Activated CD4-positive, alpha-beta T cell treated with anti-CD3 and anti-CD28 coated beads for 36 hours (primary cell): ENCODE measurements at regions of chr6 and their contacts with region 1.

Region 1: DNA sequence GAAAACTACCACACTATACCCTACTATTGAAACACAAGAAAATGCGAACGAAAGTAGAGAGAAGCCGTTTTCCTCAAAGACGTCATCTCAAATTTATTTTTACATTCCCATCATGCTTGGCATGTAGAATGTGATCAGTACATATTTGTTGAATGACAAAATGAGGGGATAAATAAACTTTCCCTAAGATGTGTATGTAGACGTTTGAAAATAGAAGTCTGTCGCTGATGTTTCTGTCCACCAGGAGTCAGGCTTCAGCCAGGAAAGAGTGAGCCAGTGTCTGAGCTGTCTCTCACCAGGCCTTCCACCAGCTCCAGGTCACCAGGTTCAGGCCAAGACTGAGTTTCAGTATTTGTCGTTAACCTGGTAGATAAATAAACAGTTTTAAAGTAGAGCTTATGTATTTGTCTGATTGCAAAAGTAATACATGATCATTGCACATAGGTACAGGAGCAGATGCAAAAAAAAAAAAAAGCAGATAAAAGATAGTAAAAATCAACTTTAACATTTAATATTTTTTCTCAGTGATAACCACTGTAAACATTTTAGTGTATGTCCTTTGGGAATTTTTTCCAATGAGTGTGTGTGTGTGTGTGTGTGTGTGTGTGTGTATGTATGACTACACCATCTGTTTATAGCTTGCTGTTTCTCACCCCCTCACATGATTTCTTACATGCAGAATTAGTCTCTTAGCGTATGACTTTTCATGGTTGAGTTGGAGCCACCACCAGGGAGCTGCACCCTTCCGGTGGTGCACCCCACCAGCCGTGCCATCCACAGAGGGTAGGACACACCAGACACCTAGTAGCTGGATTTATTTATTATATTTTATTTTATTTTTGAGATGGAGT is 26.2 kb downstream of the WRNIP1 start:
- DNase-seq: peak; percentile 83
- ATAC-seq: peak; percentile 76
- H3K4me3 Mint-ChIP-seq: no peak overlapping the region
- H3K27ac Mint-ChIP-seq: peak overlapping the region; percentile 71
- H3K4me1 Mint-ChIP-seq: peaks cover 44% of the 10 kb centered on the region
- H3K27me3 Mint-ChIP-seq: no peaks in the 10 kb centered on the region

Region 2: GRCh38 chr6:2651961-2652360 is 139.4 kb before region 1 on chr6:
- CTCF ChIA-PET with region 1: no interaction called
- POLR2A ChIA-PET with region 1: no interaction called
- intact Hi-C with region 1: no loop called
- DNase-seq: no peak
- ATAC-seq: no peak
- H3K4me3 Mint-ChIP-seq: no peak overlapping the region
- H3K27ac Mint-ChIP-seq: no peak overlapping the region
- H3K4me1 Mint-ChIP-seq: no peaks in the 10 kb centered on the region
- H3K27me3 Mint-ChIP-seq: peaks cover 14% of the 10 kb centered on the region

Region 3: GRCh38 chr6:2773450-2773849 is 17.9 kb before region 1 on chr6:
- CTCF ChIA-PET with region 1: interaction called, 33 read pairs
- POLR2A ChIA-PET with region 1: no interaction called
- intact Hi-C with region 1: loop called in 1 of 2 experiments (anchors 2 kb)
- DNase-seq: no peak
- ATAC-seq: no peak
- H3K4me3 Mint-ChIP-seq: no peak overlapping the region
- H3K27ac Mint-ChIP-seq: no peak overlapping the region
- H3K4me1 Mint-ChIP-seq: peaks cover 42% of the 10 kb centered on the region
- H3K27me3 Mint-ChIP-seq: no peaks in the 10 kb centered on the region

Region 4: GRCh38 chr6:2848851-2849250 is 57.5 kb after region 1 on chr6:
- CTCF ChIA-PET with region 1: interaction called, 49 read pairs
- POLR2A ChIA-PET with region 1: no interaction called
- intact Hi-C with region 1: loop called (anchors 1 to 2 kb)
- DNase-seq: peak; percentile 86
- ATAC-seq: peak; percentile 69
- H3K4me3 Mint-ChIP-seq: peak overlapping the region; percentile 58
- H3K27ac Mint-ChIP-seq: peak overlapping the region; percentile 88
- H3K4me1 Mint-ChIP-seq: peaks cover 59% of the 10 kb centered on the region
- H3K27me3 Mint-ChIP-seq: no peaks in the 10 kb centered on the region

Region 5: DNA sequence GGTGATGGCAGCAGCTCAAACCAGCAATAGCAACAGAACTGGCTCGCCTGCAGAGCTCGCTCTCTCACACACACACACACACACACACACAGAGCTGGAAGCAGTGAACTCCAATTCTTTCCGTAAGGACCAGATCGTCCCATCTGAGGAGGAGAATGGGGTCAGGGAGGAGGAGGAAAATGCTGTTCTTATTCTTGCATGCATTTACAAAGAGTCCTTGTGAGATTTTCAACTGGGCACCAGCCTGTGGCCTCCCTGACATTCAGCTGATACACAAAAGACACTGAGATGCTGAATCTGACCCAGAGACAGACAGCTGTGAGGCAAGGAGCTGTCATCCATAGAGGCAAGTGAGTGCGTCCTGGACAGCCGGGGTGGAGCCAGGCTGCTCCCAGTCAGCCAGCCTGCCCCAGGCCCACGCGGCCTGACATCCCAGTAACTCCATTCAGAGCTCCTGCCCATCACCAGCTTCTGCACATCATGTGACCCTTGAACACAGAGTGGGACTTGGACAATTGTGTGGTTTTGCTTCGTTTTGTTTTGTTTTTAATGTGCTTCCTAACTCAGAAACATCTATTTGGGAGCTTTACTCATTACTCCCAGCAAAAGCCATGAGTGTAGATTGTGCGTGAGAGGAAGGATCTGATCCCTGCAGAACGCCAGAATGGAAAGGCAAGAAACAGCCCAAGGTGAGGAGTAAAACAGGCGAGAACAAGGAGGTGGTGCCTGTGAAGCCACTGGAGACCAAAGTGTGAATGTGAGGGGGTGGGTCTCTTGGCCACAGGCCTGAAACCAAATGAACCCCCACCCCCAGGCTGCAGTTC is 109.7 kb after region 1 on chr6:
- CTCF ChIA-PET with region 1: interaction called, 10 read pairs
- POLR2A ChIA-PET with region 1: interaction called, 4 read pairs
- intact Hi-C with region 1: no loop called
- DNase-seq: peak; percentile 26
- ATAC-seq: no peak
- H3K4me3 Mint-ChIP-seq: peak overlapping the region; percentile 91
- H3K27ac Mint-ChIP-seq: peak overlapping the region; percentile 93
- H3K4me1 Mint-ChIP-seq: peaks cover 45% of the 10 kb centered on the region
- H3K27me3 Mint-ChIP-seq: no peaks in the 10 kb centered on the region

Region 6: DNA sequence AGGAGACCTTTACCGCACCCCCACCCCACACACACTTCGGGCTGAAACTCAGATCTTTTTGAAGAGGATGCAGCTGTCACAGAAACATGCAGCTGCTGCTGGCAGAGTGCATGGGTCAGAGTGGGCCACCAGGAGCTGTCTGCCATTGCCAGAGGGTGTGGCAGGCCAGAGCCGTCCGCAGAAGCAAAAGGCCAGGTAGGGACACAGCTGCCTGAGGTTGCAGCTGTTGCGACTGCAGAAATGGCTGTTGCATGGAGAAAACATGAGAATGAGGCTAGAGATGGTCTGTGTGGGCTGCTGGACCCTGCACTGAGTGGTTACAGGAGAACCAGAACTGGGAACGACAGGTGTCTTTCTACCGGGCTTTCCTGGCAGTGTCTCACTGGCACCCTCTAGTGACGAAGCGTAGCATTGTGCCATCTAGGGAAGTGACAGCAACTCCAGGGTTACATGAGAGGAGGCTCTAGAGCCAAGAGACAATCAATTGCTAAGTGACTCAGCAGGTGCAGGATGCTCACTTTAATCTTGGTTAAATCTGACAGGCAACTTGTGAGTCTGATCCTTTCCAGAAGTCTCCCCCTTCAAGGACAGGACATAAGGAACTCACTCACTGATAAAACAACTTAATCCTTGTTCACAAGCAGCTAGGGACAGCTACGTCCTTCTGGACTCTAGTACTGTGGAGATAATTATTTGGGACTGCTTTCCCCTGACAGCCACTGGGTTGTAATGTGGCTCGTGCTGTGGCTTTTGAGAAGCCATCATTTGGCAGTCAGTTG is 140.8 kb after region 1 on chr6:
- CTCF ChIA-PET with region 1: interaction called, 63 read pairs
- POLR2A ChIA-PET with region 1: interaction called, 9 read pairs
- intact Hi-C with region 1: loop called (anchors 1 kb)
- DNase-seq: peak; percentile 92
- ATAC-seq: peak; percentile 88
- H3K4me3 Mint-ChIP-seq: no peak overlapping the region
- H3K27ac Mint-ChIP-seq: peak overlapping the region; percentile 67
- H3K4me1 Mint-ChIP-seq: peaks cover 30% of the 10 kb centered on the region
- H3K27me3 Mint-ChIP-seq: no peaks in the 10 kb centered on the region

Region 7: GRCh38 chr6:3023663-3024483 is 232.5 kb after region 1 on chr6:
- CTCF ChIA-PET with region 1: interaction called, 10 read pairs
- POLR2A ChIA-PET with region 1: no interaction called
- intact Hi-C with region 1: no loop called
- DNase-seq: peak; percentile 95
- ATAC-seq: peak; percentile 86
- H3K4me3 Mint-ChIP-seq: peak overlapping the region; percentile 78
- H3K27ac Mint-ChIP-seq: peak overlapping the region; percentile 95
- H3K4me1 Mint-ChIP-seq: peaks cover 62% of the 10 kb centered on the region
- H3K27me3 Mint-ChIP-seq: no peaks in the 10 kb centered on the region